Activated naive CD4-positive, alpha-beta T cell treated with anti-CD3 and anti-CD28 coated beads for 36 hours (primary cell): ENCODE measurements at regions of chr6 and their contacts with region 1.

Region 1: GRCh38 chr6:5626727-5627426 is 365.6 kb downstream of the FARS2 start:
- DNase-seq: peak; percentile 54
- H3K4me3 Mint-ChIP-seq: peak overlapping the region; percentile 2
- H3K27ac Mint-ChIP-seq: no peak overlapping the region
- H3K4me1 Mint-ChIP-seq: peaks cover 50% of the 10 kb centered on the region
- H3K27me3 Mint-ChIP-seq: no peaks in the 10 kb centered on the region

Region 2: DNA sequence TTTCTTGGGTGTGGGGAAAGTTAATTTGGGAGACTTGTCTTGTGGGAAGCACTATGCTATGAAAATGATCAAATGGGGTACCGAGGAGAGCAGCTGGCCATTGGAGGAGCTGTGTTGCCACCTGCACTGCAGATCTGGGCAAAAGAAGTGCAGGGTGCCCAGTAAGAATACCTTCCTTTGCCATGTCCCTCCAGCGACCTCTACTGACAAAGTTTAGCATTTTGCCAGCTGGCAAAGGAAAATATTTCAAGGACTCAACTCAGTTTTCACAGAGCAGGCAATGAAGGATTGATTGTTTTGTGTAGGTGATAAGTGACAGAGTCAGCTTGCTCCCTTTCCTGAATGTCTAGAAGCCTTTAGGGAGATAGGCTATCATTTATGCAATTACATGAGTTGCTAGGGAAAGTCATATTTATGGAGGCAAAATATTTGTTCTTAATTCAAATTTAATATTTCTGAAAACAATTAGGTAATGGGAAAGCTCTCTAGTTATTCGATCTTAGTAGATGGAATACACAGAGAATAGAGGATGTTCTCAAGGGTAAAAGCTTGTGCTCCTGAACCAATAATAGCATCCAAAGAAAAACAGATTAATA is 247.1 kb before region 1 on chr6:
- CTCF ChIA-PET with region 1: no interaction called
- intact Hi-C with region 1: no loop called
- DNase-seq: peak; percentile 44
- H3K4me3 Mint-ChIP-seq: no peak overlapping the region
- H3K27ac Mint-ChIP-seq: no peak overlapping the region
- H3K4me1 Mint-ChIP-seq: no peaks in the 10 kb centered on the region
- H3K27me3 Mint-ChIP-seq: no peaks in the 10 kb centered on the region

Region 3: DNA sequence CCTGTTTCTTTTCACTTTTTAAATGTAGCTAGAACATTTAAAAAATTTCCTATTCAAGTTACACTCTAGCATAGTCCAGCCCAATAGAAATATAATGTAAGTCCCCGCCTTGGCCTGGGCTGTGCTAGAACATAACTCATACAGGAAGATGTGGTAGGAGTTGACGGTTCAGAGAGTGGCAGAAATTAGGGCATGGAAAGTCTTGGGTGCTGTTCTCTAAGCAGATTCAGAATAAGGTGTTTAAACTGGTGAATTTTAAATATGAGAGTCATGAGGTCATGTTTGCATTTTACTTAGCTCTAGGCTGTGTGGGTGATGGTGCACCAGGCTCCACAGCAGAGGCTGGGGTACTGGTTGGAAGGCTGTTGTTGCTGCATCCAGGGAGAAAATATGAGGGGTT is 109.1 kb before region 1 on chr6:
- CTCF ChIA-PET with region 1: no interaction called
- intact Hi-C with region 1: loop called (anchors 1 kb)
- DNase-seq: peak; percentile 72
- H3K4me3 Mint-ChIP-seq: no peak overlapping the region
- H3K27ac Mint-ChIP-seq: peak overlapping the region; percentile 53
- H3K4me1 Mint-ChIP-seq: peaks cover 60% of the 10 kb centered on the region
- H3K27me3 Mint-ChIP-seq: no peaks in the 10 kb centered on the region

Region 4: DNA sequence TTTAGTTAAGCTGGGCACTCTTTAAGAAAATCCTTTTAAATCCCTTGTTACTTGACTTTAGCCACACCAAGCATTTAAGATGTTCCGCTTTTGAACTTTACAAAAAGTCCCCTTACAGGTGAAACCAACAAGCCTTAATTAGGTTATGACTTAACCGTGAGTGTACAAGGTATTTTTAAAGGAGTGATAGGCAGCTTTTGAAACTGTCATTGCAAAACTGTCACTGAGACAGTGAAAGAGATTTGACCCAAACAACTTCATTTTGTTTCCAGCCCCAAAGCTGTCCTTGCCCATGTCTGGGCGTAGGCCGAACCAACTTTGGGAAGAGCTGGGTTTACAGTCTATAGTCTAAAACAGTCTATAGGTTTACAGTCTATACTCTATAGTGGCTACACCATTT is 60.2 kb before region 1 on chr6:
- CTCF ChIA-PET with region 1: no interaction called
- intact Hi-C with region 1: loop called (anchors 5 kb)
- DNase-seq: no peak
- H3K4me3 Mint-ChIP-seq: no peak overlapping the region
- H3K27ac Mint-ChIP-seq: no peak overlapping the region
- H3K4me1 Mint-ChIP-seq: peaks cover 32% of the 10 kb centered on the region
- H3K27me3 Mint-ChIP-seq: no peaks in the 10 kb centered on the region

Region 5: GRCh38 chr6:5584078-5584482 is 42.8 kb before region 1 on chr6:
- CTCF ChIA-PET with region 1: no interaction called
- intact Hi-C with region 1: loop called (anchors 5 kb)
- DNase-seq: no peak
- H3K4me3 Mint-ChIP-seq: no peak overlapping the region
- H3K27ac Mint-ChIP-seq: no peak overlapping the region
- H3K4me1 Mint-ChIP-seq: peaks cover 18% of the 10 kb centered on the region
- H3K27me3 Mint-ChIP-seq: no peaks in the 10 kb centered on the region

Region 6: DNA sequence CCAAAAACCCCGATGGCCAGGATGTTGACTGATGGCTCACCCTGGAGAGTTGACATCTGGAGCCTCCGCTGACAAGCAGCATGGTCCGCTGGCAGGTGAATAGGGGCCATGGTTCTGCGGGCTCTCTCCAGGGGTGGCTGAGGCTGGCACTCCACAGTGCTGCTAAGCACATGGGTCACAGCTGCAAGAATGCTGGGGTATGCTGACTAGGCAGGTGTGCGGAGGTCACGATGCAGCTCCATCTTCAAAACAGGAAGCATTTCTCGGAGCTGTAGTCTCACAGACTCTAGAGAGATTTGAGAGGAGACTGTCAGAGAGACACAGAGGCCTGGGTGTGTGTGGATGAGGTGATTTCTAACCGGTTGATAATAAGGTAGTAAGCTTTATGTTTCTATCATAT is 38.3 kb after region 1 on chr6:
- CTCF ChIA-PET with region 1: interaction called, 3 read pairs
- intact Hi-C with region 1: loop called (anchors 1 kb)
- DNase-seq: peak; percentile 57
- H3K4me3 Mint-ChIP-seq: peak overlapping the region; percentile 46
- H3K27ac Mint-ChIP-seq: peak overlapping the region; percentile 71
- H3K4me1 Mint-ChIP-seq: peaks cover 59% of the 10 kb centered on the region
- H3K27me3 Mint-ChIP-seq: no peaks in the 10 kb centered on the region